ENCODE measurements at regions of chr3 and their contacts with region 1.

Region 1: DNA sequence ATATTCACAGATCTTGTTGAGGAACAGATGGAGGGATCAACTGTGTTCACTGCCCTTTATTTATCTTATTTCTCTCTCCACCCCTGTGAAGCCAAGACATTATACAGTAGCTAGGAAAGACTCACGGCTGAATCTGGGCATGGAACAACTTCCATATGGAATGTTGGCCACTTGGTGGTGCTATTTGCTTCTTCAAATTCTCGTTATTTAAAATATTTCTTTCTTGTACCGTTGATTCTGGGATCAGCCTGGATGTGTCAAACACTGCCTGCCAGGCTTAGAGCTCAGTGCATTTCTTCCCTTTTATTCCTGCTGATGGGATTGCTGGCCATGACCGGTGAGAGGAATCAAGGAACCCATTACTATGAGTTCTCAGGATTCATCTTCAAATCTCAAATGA is 17.5 kb upstream of the GASK1A start:
- H3K4me3 ChIP-seq: no peak overlapping the region
- H3K27ac ChIP-seq: no peak overlapping the region
- H3K4me1 ChIP-seq: no peaks in the 10 kb centered on the region
- CTCF ChIP-seq: 0 out of 2 replicates have a peak, but pooled peaks have one; percentile 34

Region 2: GRCh38 chr3:42839616-42840015 is 122.0 kb before region 1 on chr3:
- CTCF ChIA-PET with region 1: no interaction called
- POLR2A ChIA-PET with region 1: no interaction called
- H3K4me3 ChIP-seq: no peak overlapping the region
- H3K27ac ChIP-seq: no peak overlapping the region
- H3K4me1 ChIP-seq: no peaks in the 10 kb centered on the region
- CTCF ChIP-seq: 0 out of 2 replicates have a peak, but pooled peaks have one; percentile 34

Region 3: DNA sequence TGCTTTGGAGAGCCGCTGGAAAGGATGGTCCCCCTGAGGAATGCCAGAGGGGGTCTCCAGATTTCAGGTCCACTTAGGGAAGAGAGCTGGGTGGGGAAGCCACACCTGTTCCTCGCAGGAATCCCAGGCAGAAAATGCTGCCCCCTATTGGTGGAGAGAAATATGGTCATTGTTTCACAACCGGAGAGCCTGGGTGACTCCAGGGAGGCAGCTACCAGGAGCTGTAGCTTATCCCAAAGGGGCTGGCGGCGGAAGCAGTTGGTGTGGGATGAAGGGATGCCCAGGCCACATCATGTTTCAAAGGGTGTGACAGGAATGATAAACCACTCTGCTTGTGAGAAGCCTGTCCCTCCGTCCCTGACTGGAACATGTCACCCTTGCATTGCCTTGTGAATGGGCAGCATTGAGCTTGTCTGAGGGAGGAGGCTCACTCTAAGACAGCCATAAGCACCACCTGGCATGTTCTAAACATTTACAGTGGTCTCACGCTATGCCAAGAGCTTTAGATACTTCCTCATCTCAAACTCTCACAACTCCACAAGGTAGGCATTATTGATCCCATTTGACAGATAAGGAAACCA is 109.8 kb after region 1 on chr3:
- CTCF ChIA-PET with region 1: interaction called, 11 read pairs
- POLR2A ChIA-PET with region 1: no interaction called
- H3K4me3 ChIP-seq: no peak overlapping the region
- H3K27ac ChIP-seq: no peak overlapping the region
- H3K4me1 ChIP-seq: no peaks in the 10 kb centered on the region
- CTCF ChIP-seq: no peak

Region 4: DNA sequence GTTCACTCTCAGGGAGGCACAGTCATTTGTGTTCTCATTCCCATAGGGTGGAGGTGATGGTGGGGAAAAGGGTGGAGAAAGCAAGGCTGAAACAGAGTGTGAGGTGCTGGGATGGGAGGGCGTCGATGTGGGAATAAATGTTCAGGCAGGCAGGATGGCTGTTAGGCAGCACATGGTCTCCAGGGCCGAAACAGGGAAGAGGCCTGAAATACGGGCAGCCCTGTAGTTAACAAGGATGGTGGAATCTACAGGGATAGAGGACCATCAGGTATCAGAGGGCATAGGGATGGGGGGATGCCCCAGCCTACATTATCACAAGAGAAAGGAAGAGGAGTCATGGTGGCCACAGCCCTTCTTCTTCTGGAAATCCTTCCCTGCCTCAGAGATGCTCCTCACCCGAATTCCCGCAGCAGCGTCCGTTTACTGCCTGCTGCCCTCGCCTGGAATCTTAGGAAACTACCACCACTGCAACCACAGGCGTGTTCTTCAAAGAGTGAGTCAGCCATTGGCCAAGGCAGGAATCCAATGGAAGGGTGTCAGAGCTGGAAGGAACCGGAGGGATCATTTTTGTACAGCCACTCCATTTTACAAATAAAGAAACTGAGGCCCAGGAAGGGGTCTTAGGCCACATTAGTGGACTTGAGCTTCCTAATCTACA is 194.0 kb after region 1 on chr3:
- CTCF ChIA-PET with region 1: interaction called, 74 read pairs
- POLR2A ChIA-PET with region 1: no interaction called
- H3K4me3 ChIP-seq: no peak overlapping the region
- H3K27ac ChIP-seq: no peak overlapping the region
- H3K4me1 ChIP-seq: no peaks in the 10 kb centered on the region
- CTCF ChIP-seq: 0 out of 2 replicates have a peak, but pooled peaks have one; percentile 24

Region 5: GRCh38 chr3:43503067-43503728 is 541.6 kb after region 1 on chr3:
- CTCF ChIA-PET with region 1: interaction called, 24 read pairs
- POLR2A ChIA-PET with region 1: no interaction called
- H3K4me3 ChIP-seq: no peak overlapping the region
- H3K27ac ChIP-seq: no peak overlapping the region
- H3K4me1 ChIP-seq: no peaks in the 10 kb centered on the region
- CTCF ChIP-seq: no peak

Measured in HEK293 (cell line).